ENCODE measurements at regions of chr1 and their contacts with region 1.

Region 1: GRCh38 chr1:54406339-54407153 is at the start of gene SSBP3:
- DNase-seq: peak; percentile 95
- ATAC-seq: peak; percentile 76
- H3K4me3 ChIP-seq: peak within 1 kb of the TSS; percentile 86
- H3K27ac ChIP-seq: peak within 1 kb of the TSS; percentile 89
- H3K4me1 ChIP-seq: peaks cover 38% of the 10 kb centered on the region
- H3K27me3 ChIP-seq: no peaks in the 10 kb centered on the region
- CTCF ChIP-seq: no peak
- total RNA-seq, gene SSBP3: 13.0 and 15.0 TPM in 2 replicates

Region 2: GRCh38 chr1:53326088-53326597 is 1080.4 kb before region 1 on chr1:
- CTCF ChIA-PET with region 1: no interaction called
- POLR2A ChIA-PET with region 1: no interaction called
- intact Hi-C with region 1: loop called (anchors 5 kb)
- DNase-seq: peak; percentile 97
- ATAC-seq: peak; percentile 86
- H3K4me3 ChIP-seq: peak overlapping the region; percentile 89
- H3K27ac ChIP-seq: peak overlapping the region; percentile 92
- H3K4me1 ChIP-seq: peaks cover 17% of the 10 kb centered on the region
- H3K27me3 ChIP-seq: no peaks in the 10 kb centered on the region
- CTCF ChIP-seq: no peak

Region 3: DNA sequence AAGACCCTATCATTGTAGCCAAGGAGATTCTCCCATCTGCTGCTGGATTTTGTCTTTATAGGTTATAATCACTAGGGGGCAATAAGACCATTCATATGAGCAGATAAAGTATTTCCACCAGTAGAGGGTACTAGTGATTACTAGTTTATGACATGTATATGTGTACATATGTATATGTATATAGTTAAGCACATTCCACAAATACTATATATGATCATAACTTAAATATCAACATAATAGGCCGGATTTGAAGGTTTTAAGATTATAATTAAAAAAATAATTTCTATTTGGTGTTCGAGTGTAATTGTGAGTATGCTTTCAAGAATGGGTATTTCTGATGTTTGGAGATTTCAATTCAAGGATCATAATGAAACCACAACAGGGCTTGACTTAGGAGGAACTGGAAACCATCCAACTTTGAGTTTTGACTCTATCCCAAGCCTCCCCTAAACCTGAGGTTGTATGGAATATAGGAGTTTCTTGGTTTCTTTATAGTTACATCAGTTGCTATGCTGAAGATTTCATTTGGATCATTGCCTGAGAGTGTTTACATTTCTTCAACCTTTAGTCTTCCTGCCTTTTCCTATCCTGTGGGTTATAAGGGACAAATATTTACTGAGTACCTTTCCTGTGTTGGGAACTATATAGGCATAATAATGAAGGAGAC is 336.2 kb before region 1 on chr1:
- CTCF ChIA-PET with region 1: no interaction called
- POLR2A ChIA-PET with region 1: no interaction called
- intact Hi-C with region 1: loop called (anchors 1 kb)
- DNase-seq: peak; percentile 75
- ATAC-seq: peak; percentile 92
- H3K4me3 ChIP-seq: no peak overlapping the region
- H3K27ac ChIP-seq: no peak overlapping the region
- H3K4me1 ChIP-seq: 0 out of 2 replicates have a peak, but pooled peaks cover 4% of the 10 kb centered on the region
- H3K27me3 ChIP-seq: no peaks in the 10 kb centered on the region
- CTCF ChIP-seq: peak; percentile 98

Region 4: DNA sequence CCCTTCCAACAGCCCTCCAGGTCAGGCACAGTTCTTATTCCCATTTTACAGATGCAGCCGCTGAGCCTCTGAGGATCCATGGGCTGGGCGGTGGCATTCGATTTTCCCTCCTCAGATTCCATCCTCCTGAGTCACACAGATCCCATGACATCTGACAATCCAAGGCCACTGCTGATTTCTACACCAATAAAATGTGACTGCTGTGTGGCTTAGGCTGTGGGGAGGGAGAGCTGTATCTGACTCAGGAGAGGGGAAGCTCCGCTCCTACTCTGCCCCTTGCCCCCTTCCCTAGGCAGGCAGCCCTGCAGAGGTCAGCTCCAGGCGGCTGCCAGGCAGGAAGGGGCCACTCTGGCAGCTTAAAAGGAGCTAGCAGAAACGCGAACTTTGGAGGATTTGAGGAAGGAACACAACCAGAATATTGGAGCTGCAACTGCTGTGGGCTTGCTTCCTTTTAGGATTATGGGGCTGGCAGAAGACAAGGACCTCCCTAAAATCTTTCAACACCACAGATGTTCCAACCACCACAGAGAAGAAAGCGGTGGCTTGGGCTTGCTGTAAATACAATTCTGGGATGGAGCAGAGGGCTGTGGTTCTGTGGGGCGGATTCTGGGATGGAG is 156.6 kb before region 1 on chr1:
- CTCF ChIA-PET with region 1: no interaction called
- POLR2A ChIA-PET with region 1: no interaction called
- intact Hi-C with region 1: loop called (anchors 5 kb)
- DNase-seq: peak; percentile 87
- ATAC-seq: peak; percentile 67
- H3K4me3 ChIP-seq: no peak overlapping the region
- H3K27ac ChIP-seq: peak overlapping the region; percentile 66
- H3K4me1 ChIP-seq: peaks cover 40% of the 10 kb centered on the region
- H3K27me3 ChIP-seq: no peaks in the 10 kb centered on the region
- CTCF ChIP-seq: no peak

Region 5: GRCh38 chr1:54367613-54368012 is 38.9 kb before region 1 on chr1:
- CTCF ChIA-PET with region 1: no interaction called
- POLR2A ChIA-PET with region 1: no interaction called
- intact Hi-C with region 1: loop called (anchors 1 kb)
- DNase-seq: peak; percentile 56
- ATAC-seq: peak; percentile 84
- H3K4me3 ChIP-seq: no peak overlapping the region
- H3K27ac ChIP-seq: no peak overlapping the region
- H3K4me1 ChIP-seq: peaks cover 16% of the 10 kb centered on the region
- H3K27me3 ChIP-seq: no peaks in the 10 kb centered on the region
- CTCF ChIP-seq: no peak

Region 6: GRCh38 chr1:54439550-54440223 is 33.1 kb after region 1 on chr1:
- CTCF ChIA-PET with region 1: no interaction called
- POLR2A ChIA-PET with region 1: no interaction called
- intact Hi-C with region 1: no loop called
- DNase-seq: no peak
- ATAC-seq: no peak
- H3K4me3 ChIP-seq: no peak overlapping the region
- H3K27ac ChIP-seq: no peak overlapping the region
- H3K4me1 ChIP-seq: no peaks in the 10 kb centered on the region
- H3K27me3 ChIP-seq: no peaks in the 10 kb centered on the region
- CTCF ChIP-seq: no peak

Region 7: GRCh38 chr1:54865238-54866073 is 458.9 kb after region 1 on chr1:
- CTCF ChIA-PET with region 1: no interaction called
- POLR2A ChIA-PET with region 1: no interaction called
- intact Hi-C with region 1: no loop called
- DNase-seq: no peak
- ATAC-seq: no peak
- H3K4me3 ChIP-seq: no peak overlapping the region
- H3K27ac ChIP-seq: no peak overlapping the region
- H3K4me1 ChIP-seq: peaks cover 25% of the 10 kb centered on the region
- H3K27me3 ChIP-seq: no peaks in the 10 kb centered on the region
- CTCF ChIP-seq: no peak